Mammary epithelial cell (primary cell): ENCODE measurements at regions of chr17 and their contacts with region 1.

Region 1: GRCh38 chr17:4074831-4075495 is 67.9 kb downstream of the ZZEF1 start:
- DNase-seq: peak; percentile 25
- H3K4me3 ChIP-seq: no peak overlapping the region
- H3K27ac ChIP-seq: no peak overlapping the region
- H3K4me1 ChIP-seq: no peaks in the 10 kb centered on the region
- H3K27me3 ChIP-seq: no peaks in the 10 kb centered on the region
- CTCF ChIP-seq: peak; percentile 68

Region 2: DNA sequence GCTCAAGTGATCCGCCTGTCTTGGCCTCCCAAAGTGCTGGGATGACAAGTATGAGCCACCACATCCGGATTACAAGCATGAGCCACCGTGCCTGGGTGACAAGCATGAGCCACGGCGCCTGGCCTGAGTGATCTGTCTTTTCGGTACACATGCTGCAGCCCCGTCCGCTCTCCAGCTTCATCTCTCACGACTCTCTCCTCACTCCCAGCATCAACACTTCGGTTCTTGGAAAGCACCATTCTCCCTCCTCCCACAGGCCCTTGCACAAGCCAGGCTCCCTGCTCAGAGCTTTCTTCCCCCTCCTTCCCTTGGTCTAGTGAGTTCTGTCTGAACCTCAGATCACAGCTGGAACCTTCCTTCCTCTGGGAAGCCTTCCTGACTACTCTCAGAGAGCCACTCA is 222.4 kb before region 1 on chr17:
- CTCF ChIA-PET with region 1: no interaction called
- dilution Hi-C with region 1: loop called (anchors 10 kb)
- in situ Hi-C with region 1: no loop called
- intact Hi-C with region 1: no loop called
- DNase-seq: no peak
- H3K4me3 ChIP-seq: no peak overlapping the region
- H3K27ac ChIP-seq: no peak overlapping the region
- H3K4me1 ChIP-seq: peaks cover 3% of the 10 kb centered on the region
- H3K27me3 ChIP-seq: no peaks in the 10 kb centered on the region
- CTCF ChIP-seq: no peak

Region 3: DNA sequence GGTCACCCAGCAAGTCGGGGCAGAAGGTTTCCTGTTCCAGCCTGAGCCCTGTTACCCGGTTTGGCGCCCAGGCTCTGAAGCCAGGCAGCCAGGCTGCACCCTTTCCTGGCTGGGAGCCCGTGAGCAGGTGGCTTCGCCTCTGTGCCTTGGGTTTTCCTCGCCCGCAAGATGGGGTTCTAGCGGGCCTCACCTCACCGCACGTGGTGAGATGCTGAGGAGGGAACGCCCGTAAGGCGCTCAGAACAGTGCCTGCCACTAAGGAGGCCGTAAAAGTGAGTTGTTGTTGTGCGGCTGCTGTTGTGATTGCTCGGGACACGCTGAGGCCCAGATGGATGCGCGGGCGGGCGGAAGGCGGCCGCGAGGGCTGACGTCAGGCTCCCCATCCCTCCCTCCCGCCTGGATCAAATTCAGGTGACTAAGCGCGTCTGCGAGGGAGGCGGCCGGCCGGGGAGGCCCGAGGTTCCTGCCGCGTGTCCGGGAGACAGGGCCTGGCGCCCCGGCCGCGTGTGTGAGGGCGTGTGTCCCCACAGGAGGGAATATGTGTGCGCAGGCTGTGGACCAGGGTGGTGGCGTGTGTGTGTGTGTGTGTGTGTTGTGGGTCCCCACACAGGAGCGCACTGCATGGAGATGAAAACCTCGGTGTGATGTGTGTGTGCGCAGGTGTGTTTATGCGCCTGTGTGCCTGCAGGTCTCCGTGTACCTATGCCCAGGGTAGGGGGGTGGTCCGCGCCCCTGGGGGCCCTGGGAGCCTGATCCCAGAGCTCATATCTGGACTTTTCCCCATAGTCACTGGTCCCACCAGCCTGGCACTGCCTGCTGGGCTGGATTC is 186.4 kb before region 1 on chr17:
- CTCF ChIA-PET with region 1: no interaction called
- dilution Hi-C with region 1: loop called (anchors 10 kb)
- in situ Hi-C with region 1: no loop called
- intact Hi-C with region 1: no loop called
- DNase-seq: peak; percentile 81
- H3K4me3 ChIP-seq: no peak overlapping the region
- H3K27ac ChIP-seq: peak overlapping the region; percentile 45
- H3K4me1 ChIP-seq: peaks cover 50% of the 10 kb centered on the region
- H3K27me3 ChIP-seq: no peaks in the 10 kb centered on the region
- CTCF ChIP-seq: no peak

Region 4: GRCh38 chr17:3935140-3935542 is 139.8 kb before region 1 on chr17:
- CTCF ChIA-PET with region 1: no interaction called
- dilution Hi-C with region 1: no loop called
- in situ Hi-C with region 1: no loop called
- intact Hi-C with region 1: loop called (anchors 1 kb)
- DNase-seq: peak; percentile 32
- H3K4me3 ChIP-seq: no peak overlapping the region
- H3K27ac ChIP-seq: no peak overlapping the region
- H3K4me1 ChIP-seq: no peaks in the 10 kb centered on the region
- H3K27me3 ChIP-seq: no peaks in the 10 kb centered on the region
- CTCF ChIP-seq: peak; percentile 24 to 65

Region 5: GRCh38 chr17:4100883-4101756 is 26.2 kb after region 1 on chr17:
- CTCF ChIA-PET with region 1: no interaction called
- dilution Hi-C with region 1: no loop called
- in situ Hi-C with region 1: no loop called
- intact Hi-C with region 1: no loop called
- DNase-seq: no peak
- H3K4me3 ChIP-seq: no peak overlapping the region
- H3K27ac ChIP-seq: no peak overlapping the region
- H3K4me1 ChIP-seq: no peaks in the 10 kb centered on the region
- H3K27me3 ChIP-seq: no peaks in the 10 kb centered on the region
- CTCF ChIP-seq: no peak

Region 6: GRCh38 chr17:4127555-4127954 is 52.6 kb after region 1 on chr17:
- CTCF ChIA-PET with region 1: no interaction called
- dilution Hi-C with region 1: loop called (anchors 5 kb)
- in situ Hi-C with region 1: no loop called
- intact Hi-C with region 1: no loop called
- DNase-seq: no peak
- H3K4me3 ChIP-seq: no peak overlapping the region
- H3K27ac ChIP-seq: no peak overlapping the region
- H3K4me1 ChIP-seq: no peaks in the 10 kb centered on the region
- H3K27me3 ChIP-seq: no peaks in the 10 kb centered on the region
- CTCF ChIP-seq: no peak